ENCODE measurements at regions of chr12 and their contacts with region 1.

Region 1: GRCh38 chr12:108457006-108457733 is 57.9 kb upstream of the FICD start:
- DNase-seq: peak; percentile 34
- ATAC-seq: peak; percentile 89
- H3K4me3 ChIP-seq: no peak overlapping the region
- H3K27ac ChIP-seq: no peak overlapping the region
- H3K4me1 ChIP-seq: peaks cover 7% of the 10 kb centered on the region; the same call in 1 of the 2 replicates
- H3K27me3 ChIP-seq: no peaks in the 10 kb centered on the region
- CTCF ChIP-seq: peak; percentile 73 to 82 (median 74)
- EP300 ChIP-seq: no peak
- POLR2A ChIP-seq: no peak
- RAD21 ChIP-seq: peak; percentile 91

Region 2: DNA sequence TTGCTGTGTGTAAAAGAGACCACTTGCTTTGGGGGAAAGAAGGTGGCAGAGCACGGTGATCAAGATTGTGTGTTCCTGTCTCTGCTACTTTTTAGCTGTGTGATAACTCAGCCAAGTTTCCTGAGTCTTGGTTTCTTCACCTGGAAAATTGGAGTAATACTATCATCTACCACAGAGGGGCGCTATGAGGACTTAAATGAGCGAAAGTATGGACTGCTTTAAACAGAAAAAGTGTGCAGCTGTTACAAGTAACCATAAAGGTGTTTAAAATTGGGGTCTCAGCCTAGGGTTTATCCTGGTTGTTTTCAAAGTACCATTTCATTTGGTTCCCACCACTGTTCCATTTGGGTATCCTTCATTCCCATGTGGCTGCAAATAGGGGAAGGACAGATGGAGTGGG is 394.0 kb before region 1 on chr12:
- CTCF ChIA-PET with region 1: interaction called, 18 read pairs
- POLR2A ChIA-PET with region 1: no interaction called
- RAD21 ChIA-PET with region 1: interaction called, 5 read pairs
- SMC1A ChIA-PET with region 1: interaction called, 6 read pairs
- in situ Hi-C with region 1: no loop called
- intact Hi-C with region 1: loop called (anchors 2 kb)
- DNase-seq: no peak
- ATAC-seq: no peak
- H3K4me3 ChIP-seq: no peak overlapping the region
- H3K27ac ChIP-seq: no peak overlapping the region
- H3K4me1 ChIP-seq: no peaks in the 10 kb centered on the region
- H3K27me3 ChIP-seq: peaks cover 0 to 2% of the 10 kb centered on the region in 2 experiments; a peak in 2 of 4 replicates
- CTCF ChIP-seq: peak; percentile 41 to 53 (median 52); a peak in 5 of 6 replicates
- EP300 ChIP-seq: no peak
- POLR2A ChIP-seq: no peak
- RAD21 ChIP-seq: peak; percentile 67

Region 3: DNA sequence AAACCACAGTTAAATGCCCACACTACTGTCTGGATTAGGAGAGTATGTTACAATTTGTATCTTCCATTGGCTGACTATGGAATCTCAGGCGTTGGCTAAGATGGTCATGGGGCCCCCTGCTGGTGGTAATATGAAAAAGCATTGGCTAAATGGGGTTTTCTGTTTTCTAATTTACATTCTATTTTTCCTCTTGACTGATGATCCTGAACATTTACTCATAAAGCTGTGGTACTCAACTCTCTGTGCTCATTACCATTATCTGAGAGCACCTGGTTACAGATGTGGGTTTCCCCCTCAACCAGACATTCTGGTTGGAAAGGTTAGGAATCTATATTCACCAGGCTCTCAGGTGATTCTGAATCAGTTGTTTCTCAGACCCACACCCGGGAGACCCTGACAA is 263.3 kb before region 1 on chr12:
- CTCF ChIA-PET with region 1: interaction called, 9 read pairs
- POLR2A ChIA-PET with region 1: no interaction called
- RAD21 ChIA-PET with region 1: interaction called, 3 read pairs
- SMC1A ChIA-PET with region 1: interaction called, 5 read pairs
- in situ Hi-C with region 1: no loop called
- intact Hi-C with region 1: loop called (anchors 2 kb)
- DNase-seq: no peak
- ATAC-seq: peak; percentile 70
- H3K4me3 ChIP-seq: no peak overlapping the region
- H3K27ac ChIP-seq: no peak overlapping the region
- H3K4me1 ChIP-seq: no peaks in the 10 kb centered on the region
- H3K27me3 ChIP-seq: no peaks in the 10 kb centered on the region; a peak in 2 of 4 replicates
- CTCF ChIP-seq: peak; percentile 66 to 72 (median 67)
- EP300 ChIP-seq: no peak
- POLR2A ChIP-seq: no peak
- RAD21 ChIP-seq: peak; percentile 63

Region 4: DNA sequence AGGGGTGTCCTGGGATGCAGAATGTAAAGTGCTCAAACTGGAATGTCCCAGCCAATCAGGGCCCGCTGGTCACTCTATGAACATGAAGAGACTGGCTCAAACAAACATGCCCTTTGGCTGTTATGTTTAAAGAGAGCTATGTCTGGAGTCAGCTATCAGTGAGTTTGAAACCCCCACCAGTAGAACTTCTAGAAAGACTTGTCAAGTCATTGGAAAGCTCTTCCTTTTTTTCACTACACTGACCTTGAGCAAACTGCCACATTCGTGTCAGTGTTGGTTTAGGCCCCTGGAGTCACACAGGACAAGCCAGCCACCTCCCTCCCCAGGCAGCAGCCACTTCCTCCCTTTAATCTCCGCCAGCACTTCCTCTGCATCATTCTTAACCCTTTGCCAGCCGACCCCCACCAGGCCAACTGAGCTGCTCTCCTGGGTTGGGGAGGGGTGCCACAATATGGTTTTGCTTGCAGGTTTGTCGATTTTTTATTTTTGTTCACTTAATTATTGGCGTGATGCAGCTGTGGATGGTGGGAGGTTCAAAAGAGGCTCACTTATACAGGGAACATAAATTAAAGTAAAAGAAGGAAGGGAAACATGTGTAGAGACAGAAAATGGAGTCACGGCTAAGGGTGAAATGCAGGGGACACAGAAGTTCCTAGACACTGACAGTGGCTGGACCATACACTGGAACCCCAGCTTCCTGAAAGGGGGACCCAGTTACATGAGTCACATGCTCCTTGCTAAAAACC is 143.4 kb before region 1 on chr12:
- CTCF ChIA-PET with region 1: interaction called, 6 read pairs
- POLR2A ChIA-PET with region 1: interaction called, 8 read pairs
- RAD21 ChIA-PET with region 1: interaction called, 7 read pairs
- SMC1A ChIA-PET with region 1: interaction called, 9 read pairs
- in situ Hi-C with region 1: no loop called
- intact Hi-C with region 1: loop called (anchors 2 kb)
- DNase-seq: no peak
- ATAC-seq: peak; percentile 56
- H3K4me3 ChIP-seq: peak overlapping the region; percentile 9; the same call in 1 of the 2 replicates
- H3K27ac ChIP-seq: peak overlapping the region; percentile 71
- H3K4me1 ChIP-seq: peaks cover 80% of the 10 kb centered on the region
- H3K27me3 ChIP-seq: no peaks in the 10 kb centered on the region
- CTCF ChIP-seq: no peak
- EP300 ChIP-seq: no peak
- POLR2A ChIP-seq: no peak
- RAD21 ChIP-seq: no peak

Region 5: GRCh38 chr12:108360487-108360886 is 96.7 kb before region 1 on chr12:
- CTCF ChIA-PET with region 1: interaction called, 5 read pairs
- POLR2A ChIA-PET with region 1: no interaction called
- RAD21 ChIA-PET with region 1: no interaction called
- SMC1A ChIA-PET with region 1: interaction called, 4 read pairs
- in situ Hi-C with region 1: no loop called
- intact Hi-C with region 1: loop called (anchors 1 kb)
- DNase-seq: peak; percentile 84
- ATAC-seq: peak; percentile 86
- H3K4me3 ChIP-seq: no peak overlapping the region; the same call in 1 of the 2 replicates
- H3K27ac ChIP-seq: peak overlapping the region; percentile 57
- H3K4me1 ChIP-seq: peaks cover 30% of the 10 kb centered on the region
- H3K27me3 ChIP-seq: no peaks in the 10 kb centered on the region
- CTCF ChIP-seq: no peak
- EP300 ChIP-seq: peak; percentile 54 to 73; a peak in 3 of 4 replicates
- POLR2A ChIP-seq: no peak
- RAD21 ChIP-seq: 0 out of 2 replicates have a peak, but pooled peaks have one; percentile 21

Region 6: GRCh38 chr12:108514973-108515814 is 58.0 kb after region 1 on chr12 and contains the start of gene FICD:
- CTCF ChIA-PET with region 1: interaction called, 17 read pairs
- POLR2A ChIA-PET with region 1: no interaction called
- RAD21 ChIA-PET with region 1: no interaction called
- SMC1A ChIA-PET with region 1: interaction called, 10 read pairs
- in situ Hi-C with region 1: no loop called
- intact Hi-C with region 1: loop called (anchors 2 kb)
- DNase-seq: peak; percentile 97
- ATAC-seq: peak; percentile 88
- H3K4me3 ChIP-seq: peak within 1 kb of the TSS; percentile 97
- H3K27ac ChIP-seq: peak within 1 kb of the TSS; percentile 84
- H3K4me1 ChIP-seq: peaks cover 23% of the 10 kb centered on the region
- H3K27me3 ChIP-seq: no peaks in the 10 kb centered on the region
- CTCF ChIP-seq: 0 out of 6 replicates have a peak, but pooled peaks of 1 of the 3 experiments have one; percentile 0
- EP300 ChIP-seq: no peak
- POLR2A ChIP-seq: peak; percentile 82
- RAD21 ChIP-seq: no peak
- polyA plus RNA-seq, gene FICD: 3.2 to 3.3 TPM